ENCODE measurements at regions of chr2 and their contacts with region 1.

Region 1: DNA sequence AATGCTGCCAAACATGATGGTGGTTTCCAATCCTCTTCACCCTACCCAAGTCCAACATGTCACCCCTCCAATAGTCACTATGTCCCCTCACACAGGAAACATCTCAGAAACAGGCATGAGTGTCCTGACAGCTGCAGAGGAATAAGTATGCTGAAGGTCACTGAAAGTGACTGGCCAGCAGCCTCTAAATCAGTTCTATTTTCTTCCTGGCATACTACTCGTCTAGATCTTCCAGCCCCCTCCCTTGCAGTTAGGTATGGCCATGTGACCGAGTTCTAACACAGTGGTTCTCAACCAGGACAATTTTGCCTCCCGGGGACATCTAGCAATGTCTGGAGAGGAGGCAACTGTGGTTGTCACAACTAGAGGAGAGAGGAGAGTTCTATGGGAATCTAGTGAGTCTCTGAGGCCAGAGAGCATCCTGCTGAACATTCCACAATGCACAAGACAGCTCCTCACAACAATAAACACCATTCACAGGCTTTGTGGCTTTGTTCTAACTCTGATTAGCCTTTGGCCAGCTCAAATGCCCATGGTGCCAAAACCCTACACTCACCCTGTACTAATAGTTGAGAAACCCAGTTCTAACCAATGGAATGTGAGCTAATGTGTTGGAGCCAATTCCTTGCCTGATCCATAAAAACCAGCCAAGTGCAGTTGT is 12.6 kb upstream of the ID2 start:
- DNase-seq: no peak

Region 2: GRCh38 chr2:8539743-8540551 is 129.3 kb before region 1 on chr2:
- intact Hi-C with region 1: loop called in 1 of 2 experiments (anchors 5 kb)
- DNase-seq: peak; percentile 84

Region 3: GRCh38 chr2:8719528-8719927 is 50.2 kb after region 1 on chr2:
- intact Hi-C with region 1: no loop called
- DNase-seq: no peak

Measured in posterior vena cava (tissue), 2 donors.